ENCODE measurements at regions of chr10 and their contacts with region 1.

Region 1: GRCh38 chr10:76026905-76027304 is 595.5 kb downstream of the LRMDA start:
- DNase-seq: no peak
- ATAC-seq: no peak

Region 2: DNA sequence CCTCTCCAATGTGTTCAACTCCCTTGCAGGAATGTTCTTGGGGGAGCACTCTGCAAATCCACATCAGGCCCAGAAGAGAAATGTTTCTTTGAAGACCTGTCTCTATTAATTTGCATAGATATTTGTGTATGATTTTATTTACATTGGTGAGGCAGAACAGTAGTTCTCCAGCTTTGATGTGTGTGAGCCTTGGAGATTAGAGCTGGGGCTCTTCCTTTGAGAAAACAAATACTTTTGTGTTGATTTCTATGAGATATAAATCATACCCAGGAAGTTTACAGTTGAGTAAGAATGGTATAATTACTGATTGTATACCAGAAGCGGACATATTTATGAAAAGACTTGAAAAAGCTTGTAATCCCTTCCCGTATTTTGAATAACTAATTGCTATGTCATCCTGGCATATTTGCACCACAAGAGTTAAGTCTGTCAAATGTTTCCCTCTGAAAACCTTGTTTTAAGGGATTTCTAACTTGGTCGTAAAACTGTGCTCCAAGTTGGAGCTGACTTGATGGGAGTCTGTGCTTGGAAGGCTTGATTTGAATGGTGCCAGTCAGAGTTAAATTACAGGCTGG is 127.0 kb before region 1 on chr10:
- intact Hi-C with region 1: no loop called
- DNase-seq: no peak
- ATAC-seq: no peak

Region 3: DNA sequence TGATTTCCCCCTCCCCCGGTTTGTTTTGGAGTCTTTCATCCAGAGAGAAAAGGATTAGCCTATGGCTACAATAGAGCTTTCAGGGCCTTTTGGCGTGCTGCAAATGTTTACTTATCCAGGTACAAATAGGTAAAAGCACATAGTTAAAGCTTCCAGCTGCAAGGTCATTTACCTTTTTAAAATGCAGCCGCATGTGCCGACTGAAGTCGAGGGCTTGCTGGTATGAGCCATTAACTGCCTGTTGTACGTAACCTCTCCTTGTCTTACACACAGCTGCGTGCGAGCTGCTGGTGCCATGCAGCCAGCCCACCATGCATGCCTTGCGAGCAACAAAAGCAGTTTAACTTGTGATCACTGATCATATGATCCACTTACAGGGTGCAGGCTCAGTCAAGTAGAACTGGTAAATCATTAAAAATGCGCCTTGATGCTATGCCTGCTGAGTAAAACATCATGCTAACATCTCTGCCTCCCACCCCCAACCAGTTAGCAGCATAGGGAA is 270.9 kb after region 1 on chr10:
- intact Hi-C with region 1: loop called (anchors 5 to 10 kb)
- DNase-seq: no peak
- ATAC-seq: no peak

Measured in left cardiac atrium (tissue), 4 donors.